ENCODE measurements at regions of chr14 and their contacts with region 1.

Region 1: GRCh38 chr14:75720842-75721498 is 59.9 kb downstream of the TTLL5 start:
- DNase-seq: peak; percentile 37 to 66
- ATAC-seq: peak; percentile 43 to 80 (median 63)
- H3K4me3 ChIP-seq: peak overlapping the region in 3 of 10 donors; percentile 4 to 18 (median 18)
- H3K27ac ChIP-seq: peak overlapping the region in 9 of 10 donors; percentile 13 to 82 (median 67)
- H3K4me1 ChIP-seq: peaks cover 3 to 72% (median 36%) of the 10 kb centered on the region in 9 donors
- H3K27me3 ChIP-seq: no peaks in the 10 kb centered on the region
- CTCF ChIP-seq: no peak

Region 2: GRCh38 chr14:75764022-75764421 is 43.1 kb after region 1 on chr14:
- intact Hi-C with region 1: loop called in 1 of 10 experiments (anchors 5 kb)
- DNase-seq: no peak
- ATAC-seq: no peak
- H3K4me3 ChIP-seq: no peak overlapping the region
- H3K27ac ChIP-seq: no peak overlapping the region
- H3K4me1 ChIP-seq: peaks cover 0 to 13% (median 3%) of the 10 kb centered on the region in 9 donors
- H3K27me3 ChIP-seq: no peaks in the 10 kb centered on the region
- CTCF ChIP-seq: no peak